Esophagus squamous epithelium (tissue), 5 donors: ENCODE measurements at regions of chr7 and their contacts with region 1.

Region 1: GRCh38 chr7:101815835-101816493 is 1.5 kb upstream of the CUX1 start:
- DNase-seq: peak; percentile 35
- H3K4me3 ChIP-seq: peak overlapping the region; percentile 47 to 88 (median 85)
- H3K27ac ChIP-seq: peak overlapping the region; percentile 71 to 92 (median 86)
- H3K4me1 ChIP-seq: peaks cover 7 to 53% (median 8%) of the 10 kb centered on the region in 3 donors
- H3K27me3 ChIP-seq: peaks cover 0 to 7% (median 0%) of the 10 kb centered on the region in 4 donors
- CTCF ChIP-seq: peak in 3 of 6 experiments; percentile 4 to 46 (median 43)
- POLR2A ChIP-seq: peak in 1 of 4 donors; percentile 33

Region 2: GRCh38 chr7:101602484-101603241 is 213.3 kb before region 1 on chr7:
- intact Hi-C with region 1: loop called (anchors 10 kb)
- DNase-seq: no peak
- H3K4me3 ChIP-seq: no peak overlapping the region
- H3K27ac ChIP-seq: no peak overlapping the region
- H3K4me1 ChIP-seq: peaks cover 6 to 22% (median 7%) of the 10 kb centered on the region in 3 donors
- H3K27me3 ChIP-seq: peaks cover 0 to 25% (median 0%) of the 10 kb centered on the region in 4 donors
- CTCF ChIP-seq: peak; percentile 73 to 86 (median 80)
- POLR2A ChIP-seq: no peak

Region 3: GRCh38 chr7:101688183-101688831 is 127.7 kb before region 1 on chr7:
- intact Hi-C with region 1: loop called (anchors 5 kb)
- DNase-seq: no peak
- H3K4me3 ChIP-seq: peak overlapping the region in 2 of 4 donors; percentile 26 to 54
- H3K27ac ChIP-seq: peak overlapping the region in 1 of 4 donors; percentile 17
- H3K4me1 ChIP-seq: peaks cover 4 to 15% (median 14%) of the 10 kb centered on the region in 3 donors
- H3K27me3 ChIP-seq: peaks cover 0 to 9% (median 0%) of the 10 kb centered on the region in 4 donors
- CTCF ChIP-seq: peak; percentile 88 to 99 (median 94)
- POLR2A ChIP-seq: no peak

Region 4: DNA sequence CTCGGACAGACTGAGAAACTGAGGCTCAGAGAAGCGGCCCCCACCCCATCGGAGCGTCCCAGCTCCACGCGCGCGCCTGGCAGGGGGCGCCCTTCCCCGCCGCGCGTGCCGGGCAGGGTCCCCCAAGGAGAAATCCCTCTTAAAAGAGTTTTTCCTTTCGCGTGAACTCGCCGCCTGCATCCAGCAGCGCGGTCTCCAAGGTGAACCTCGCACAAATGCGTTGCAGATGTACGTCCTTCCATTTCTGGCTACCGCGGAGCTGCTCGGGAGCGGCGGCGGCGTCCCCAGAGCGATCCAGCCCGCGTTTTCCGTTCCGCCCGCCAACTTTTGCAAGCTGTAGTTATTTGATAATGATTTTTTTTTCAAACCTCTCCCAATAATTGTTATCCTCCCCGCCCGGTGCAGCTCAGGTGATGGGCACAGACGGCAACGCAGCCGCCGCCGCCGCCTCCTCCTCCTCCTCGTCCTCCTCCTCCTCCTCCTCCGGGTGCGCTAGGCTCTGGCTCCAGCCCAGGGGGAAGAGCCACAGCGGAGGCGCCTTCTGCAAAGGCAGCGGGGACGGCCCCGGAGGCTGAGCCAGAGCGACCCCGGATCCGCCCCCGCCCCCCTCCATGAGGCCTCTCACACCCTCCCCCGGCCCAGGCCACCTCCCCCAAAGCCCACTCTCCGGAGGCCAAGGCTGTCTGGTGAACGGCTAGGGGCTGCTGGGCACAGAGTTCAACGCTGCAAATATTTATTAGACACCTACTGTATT is 72.5 kb before region 1 on chr7:
- intact Hi-C with region 1: loop called (anchors 5 kb)
- DNase-seq: no peak
- H3K4me3 ChIP-seq: peak overlapping the region; percentile 21 to 64 (median 43)
- H3K27ac ChIP-seq: no peak overlapping the region
- H3K4me1 ChIP-seq: peaks cover 4 to 22% (median 9%) of the 10 kb centered on the region in 3 donors
- H3K27me3 ChIP-seq: peaks cover 0 to 52% (median 1%) of the 10 kb centered on the region in 4 donors
- CTCF ChIP-seq: peak in 5 of 6 experiments; percentile 24 to 44 (median 39)
- POLR2A ChIP-seq: no peak